ENCODE measurements at regions of chr1 and their contacts with region 1.

Region 1: GRCh38 chr1:153337980-153338853 is 10.4 kb downstream of the PGLYRP4 start:
- DNase-seq: no peak
- CTCF ChIP-seq: no peak

Region 2: DNA sequence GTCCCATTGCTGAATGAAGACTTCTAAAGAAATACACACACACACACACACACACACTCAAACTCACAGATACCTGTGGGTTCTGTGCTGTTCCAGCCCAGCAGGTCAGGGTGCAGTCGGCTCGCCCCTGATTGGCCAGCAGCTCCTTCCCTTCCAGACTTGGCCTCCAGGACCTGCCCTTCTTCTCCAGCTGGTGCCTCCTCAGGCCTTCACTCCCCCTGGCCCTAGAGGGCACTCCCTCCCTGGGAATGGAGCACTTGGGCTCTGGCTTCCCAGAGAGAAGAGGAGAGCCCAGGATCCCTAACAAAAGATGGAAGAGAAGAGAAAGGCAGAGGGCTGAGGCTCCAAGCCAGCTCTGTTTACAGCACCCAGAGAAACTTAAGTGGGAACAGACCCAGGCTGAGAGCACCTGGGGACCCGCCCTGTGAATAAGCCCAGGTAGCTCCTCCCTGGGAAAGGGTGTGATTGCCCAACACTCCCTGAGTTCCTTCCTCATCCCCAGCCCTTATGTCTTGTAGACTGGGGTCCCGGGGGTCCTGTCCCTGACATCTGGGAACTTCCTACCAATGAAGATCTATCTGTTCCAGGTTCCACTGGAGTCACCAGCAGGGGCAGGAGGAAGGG is 25.5 kb before region 1 on chr1 and contains the start of gene PGLYRP3:
- CTCF ChIA-PET with region 1: interaction called, 15 read pairs
- POLR2A ChIA-PET with region 1: no interaction called
- DNase-seq: no peak
- CTCF ChIP-seq: peak; percentile 10

Region 3: DNA sequence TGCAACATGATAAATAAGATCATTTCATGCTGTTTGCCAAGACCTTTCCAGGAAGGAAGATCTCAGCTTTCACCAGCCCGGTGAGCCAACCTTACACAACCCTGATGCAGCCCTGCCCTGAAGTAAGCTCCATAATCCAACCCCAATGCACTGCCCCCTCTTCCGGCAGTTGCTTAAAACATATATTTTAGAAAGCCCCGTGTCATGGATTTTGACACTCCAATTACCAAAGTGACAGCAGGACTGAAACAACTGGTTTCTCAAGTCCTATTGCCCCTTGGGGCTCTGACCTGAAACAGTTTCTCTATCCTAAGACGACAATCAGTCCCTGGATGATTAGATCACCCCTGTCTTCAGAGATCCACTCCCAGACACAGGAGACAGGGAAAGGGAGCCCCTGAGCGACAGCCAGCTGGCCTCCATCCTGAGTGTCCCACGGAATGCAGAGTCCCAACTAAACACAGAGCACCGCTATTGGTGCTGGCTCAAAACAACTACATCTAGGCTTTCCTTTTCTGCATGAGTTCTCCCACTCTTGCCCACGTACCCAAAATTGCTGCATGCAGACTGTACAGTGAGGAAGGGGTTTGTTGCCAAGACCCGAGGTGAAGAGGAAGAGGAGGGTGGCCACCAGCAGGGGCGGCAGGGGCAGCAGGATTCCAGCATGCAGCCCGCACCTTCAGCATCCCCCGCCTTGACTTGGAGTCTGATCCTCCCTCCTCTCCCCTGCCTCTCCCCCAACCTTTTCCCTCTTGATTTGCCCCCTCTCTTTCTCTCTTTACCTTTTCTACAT is 27.3 kb after region 1 on chr1:
- CTCF ChIA-PET with region 1: no interaction called
- POLR2A ChIA-PET with region 1: no interaction called
- DNase-seq: no peak
- CTCF ChIP-seq: no peak